ENCODE measurements at regions of chr5 and their contacts with region 1.

Region 1: DNA sequence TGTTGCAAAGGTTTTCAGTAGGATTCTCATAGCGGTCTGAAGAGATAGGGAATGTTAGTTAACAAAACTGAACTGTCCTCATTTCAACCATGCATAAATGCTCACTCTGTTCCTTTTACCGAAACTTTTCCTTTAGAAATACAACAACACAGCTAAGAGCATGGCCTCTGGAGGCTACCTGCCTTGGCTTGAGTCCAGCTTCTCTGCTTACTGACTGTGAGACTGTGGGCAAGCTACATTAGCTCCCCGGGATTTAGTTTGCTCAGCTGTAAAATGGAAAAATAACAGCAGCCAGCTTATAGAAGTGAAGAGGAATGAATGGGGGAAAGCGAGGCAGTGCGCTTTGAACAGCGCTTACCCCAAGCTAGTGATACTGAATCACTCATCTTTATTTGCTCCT is 507.9 kb upstream of the DAP start:
- DNase-seq: no peak
- ATAC-seq: no peak
- H3K4me3 ChIP-seq: no peak overlapping the region
- H3K27ac ChIP-seq: no peak overlapping the region
- H3K4me1 ChIP-seq: no peaks in the 10 kb centered on the region
- H3K27me3 ChIP-seq: no peaks in the 10 kb centered on the region

Region 2: DNA sequence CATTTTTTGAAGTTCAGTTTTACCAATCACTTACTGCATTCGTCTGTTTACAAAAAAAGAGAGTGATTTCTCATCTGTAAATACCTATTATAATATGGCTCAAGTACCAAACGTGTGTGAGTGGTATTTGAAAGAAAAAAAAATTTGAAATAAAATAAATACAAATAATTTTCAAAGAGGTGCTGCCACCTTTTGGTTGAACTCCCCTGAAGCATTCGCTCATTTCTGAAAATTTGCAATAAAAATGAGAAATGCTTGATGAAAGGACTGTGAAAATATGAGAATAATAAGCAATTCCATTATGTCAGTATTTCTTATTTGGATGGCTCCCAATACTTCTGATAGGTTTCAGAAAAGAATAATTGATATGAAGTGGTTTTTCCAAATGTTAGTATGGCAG is 225.4 kb after region 1 on chr5:
- intact Hi-C with region 1: loop called in 1 of 4 experiments (anchors 10 kb)
- DNase-seq: no peak
- ATAC-seq: no peak
- H3K4me3 ChIP-seq: no peak overlapping the region
- H3K27ac ChIP-seq: no peak overlapping the region
- H3K4me1 ChIP-seq: peaks cover 1% of the 10 kb centered on the region
- H3K27me3 ChIP-seq: no peaks in the 10 kb centered on the region

Measured in right cardiac atrium (tissue), 5 donors.